ENCODE measurements at regions of chr5 and their contacts with region 1.

Region 1: DNA sequence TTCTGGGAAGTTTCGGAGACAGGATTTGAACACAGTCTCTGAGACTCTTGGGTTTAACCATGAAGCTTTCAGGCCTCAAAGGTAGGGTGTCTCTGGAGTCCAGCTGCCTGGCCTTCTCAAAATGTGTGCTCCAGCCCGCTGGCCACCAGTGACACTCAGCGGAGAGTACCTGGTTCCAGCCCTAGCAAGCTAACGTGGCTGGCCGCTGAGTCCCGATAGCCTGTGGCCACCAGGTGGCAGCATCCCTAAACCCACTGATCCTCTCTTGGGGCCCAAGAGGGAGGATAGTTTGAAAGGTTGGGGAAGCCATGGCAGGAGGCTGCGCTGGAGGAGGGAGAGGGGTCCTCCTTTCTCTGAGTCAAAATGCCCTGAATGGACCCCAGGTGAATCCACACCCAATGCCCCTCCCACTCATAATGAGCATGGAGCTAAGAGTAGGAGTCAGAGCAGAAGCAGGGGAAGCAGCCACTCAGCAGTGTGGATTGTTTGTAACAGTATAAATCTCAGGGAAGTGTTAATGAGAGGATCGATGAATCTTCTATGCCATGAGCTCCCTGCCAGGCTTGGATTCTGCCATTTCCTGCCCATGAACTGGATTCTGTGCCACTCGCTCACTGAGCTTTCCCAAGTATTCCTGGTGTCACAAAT is 5.4 kb upstream of the TIFAB start:
- DNase-seq: peak; percentile 74
- ATAC-seq: peak; percentile 84
- H3K4me3 ChIP-seq: no peak overlapping the region
- H3K27ac ChIP-seq: no peak overlapping the region
- H3K4me1 ChIP-seq: peaks cover 10 to 38% of the 10 kb centered on the region in 2 experiments
- H3K27me3 ChIP-seq: no peaks in the 10 kb centered on the region
- CTCF ChIP-seq: peak; percentile 89 to 97 (median 95)
- POLR2A ChIP-seq: no peak
- RAD21 ChIP-seq: peak; percentile 71

Region 2: DNA sequence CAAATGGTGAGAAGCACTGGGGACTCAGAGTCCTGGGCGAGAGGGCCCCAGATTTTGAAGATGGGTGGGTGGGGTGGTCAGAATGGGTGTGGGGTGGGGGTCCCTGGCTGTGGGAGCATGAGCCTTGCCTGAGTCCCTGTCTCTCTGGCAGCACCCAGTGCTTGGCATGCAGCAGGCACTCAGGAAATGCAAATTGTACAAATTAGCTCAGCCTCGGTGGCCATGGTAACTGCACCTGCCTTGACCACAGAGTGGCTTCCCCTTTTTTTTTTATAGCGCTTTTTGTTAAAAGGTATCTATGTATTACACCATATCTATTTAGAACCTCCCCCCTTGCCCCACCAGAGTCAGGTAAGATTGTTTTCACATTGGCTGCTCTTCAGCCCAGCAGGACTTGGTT is 404.3 kb before region 1 on chr5:
- CTCF ChIA-PET with region 1: no interaction called
- POLR2A ChIA-PET with region 1: no interaction called
- RAD21 ChIA-PET with region 1: no interaction called
- intact Hi-C with region 1: no loop called
- DNase-seq: no peak
- ATAC-seq: no peak
- H3K4me3 ChIP-seq: no peak overlapping the region
- H3K27ac ChIP-seq: no peak overlapping the region
- H3K4me1 ChIP-seq: no peaks in the 10 kb centered on the region
- H3K27me3 ChIP-seq: no peaks in the 10 kb centered on the region
- CTCF ChIP-seq: no peak
- POLR2A ChIP-seq: no peak
- RAD21 ChIP-seq: no peak

Region 3: DNA sequence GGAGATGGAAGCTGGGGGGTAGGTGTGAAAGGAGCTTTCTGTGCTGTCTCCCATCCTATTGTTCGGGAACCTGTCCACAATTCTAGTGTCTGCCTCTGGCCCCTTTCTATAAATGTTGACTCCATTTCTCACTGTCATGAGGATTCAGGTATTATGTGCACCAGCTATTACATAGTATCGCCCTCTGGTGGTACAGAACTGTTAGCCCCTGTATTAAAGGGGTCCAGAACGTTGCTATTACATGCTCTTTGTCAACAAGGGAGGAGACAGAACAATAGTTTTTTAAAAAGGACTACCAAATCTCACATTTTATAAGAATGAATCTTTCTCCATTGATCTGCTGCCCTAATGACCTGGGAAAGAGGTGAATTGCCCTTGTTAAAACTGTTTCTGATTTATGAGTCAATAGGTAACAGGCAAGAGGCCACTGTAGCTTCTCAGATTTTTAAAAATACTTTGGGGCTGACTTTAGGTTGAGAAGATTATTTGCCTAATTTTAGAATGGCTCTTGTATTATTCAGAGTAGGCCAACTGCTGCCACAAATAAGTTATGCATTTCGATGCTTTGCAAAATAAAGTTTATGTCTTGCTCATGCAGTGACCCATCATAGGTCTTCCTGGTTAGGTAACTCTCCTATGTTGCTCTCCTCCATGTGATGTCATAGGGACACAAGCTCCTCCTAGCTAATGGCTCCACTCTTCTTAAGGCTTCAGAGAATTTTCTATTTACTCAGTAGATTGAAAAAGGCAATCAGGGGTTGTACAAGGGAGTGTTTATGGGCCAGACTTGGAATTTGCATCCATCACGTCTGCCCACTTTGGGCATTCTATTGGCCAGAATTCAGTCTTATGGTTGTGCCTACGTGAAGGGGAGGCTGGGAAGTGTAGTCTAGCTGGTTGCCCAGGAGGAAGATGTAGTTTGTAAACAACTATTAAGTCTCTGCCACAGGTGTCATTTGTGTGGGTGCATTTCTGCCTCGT is 31.2 kb before region 1 on chr5:
- CTCF ChIA-PET with region 1: interaction called, 17 read pairs
- POLR2A ChIA-PET with region 1: interaction called, 4 read pairs
- RAD21 ChIA-PET with region 1: no interaction called
- intact Hi-C with region 1: no loop called
- DNase-seq: peak; percentile 65
- ATAC-seq: peak; percentile 92
- H3K4me3 ChIP-seq: no peak overlapping the region
- H3K27ac ChIP-seq: no peak overlapping the region
- H3K4me1 ChIP-seq: peaks cover 9 to 23% of the 10 kb centered on the region in 2 experiments; a peak in 3 of 4 replicates
- H3K27me3 ChIP-seq: no peaks in the 10 kb centered on the region
- CTCF ChIP-seq: peak; percentile 66 to 92 (median 86); a peak in 5 of 6 replicates
- POLR2A ChIP-seq: no peak
- RAD21 ChIP-seq: peak; percentile 77

Region 4: GRCh38 chr5:135551593-135552447 is 94.3 kb after region 1 on chr5:
- CTCF ChIA-PET with region 1: interaction called, 476 read pairs
- POLR2A ChIA-PET with region 1: interaction called, 12 read pairs
- RAD21 ChIA-PET with region 1: interaction called, 5 to 8 read pairs
- intact Hi-C with region 1: loop called (anchors 1 kb)
- DNase-seq: peak; percentile 69
- ATAC-seq: peak; percentile 85
- H3K4me3 ChIP-seq: no peak overlapping the region
- H3K27ac ChIP-seq: no peak overlapping the region
- H3K4me1 ChIP-seq: peaks cover 8% of the 10 kb centered on the region in 2 experiments
- H3K27me3 ChIP-seq: peaks cover 11% of the 10 kb centered on the region; the same call in 1 of the 2 replicates
- CTCF ChIP-seq: peak; percentile 85 to 92 (median 92)
- POLR2A ChIP-seq: no peak
- RAD21 ChIP-seq: peak; percentile 94

Region 5: GRCh38 chr5:135565725-135566421 is 108.3 kb after region 1 on chr5:
- CTCF ChIA-PET with region 1: interaction called, 153 read pairs
- POLR2A ChIA-PET with region 1: no interaction called
- RAD21 ChIA-PET with region 1: interaction called, 5 to 9 read pairs
- intact Hi-C with region 1: loop called (anchors 1 kb)
- DNase-seq: peak; percentile 50
- ATAC-seq: peak; percentile 77
- H3K4me3 ChIP-seq: no peak overlapping the region
- H3K27ac ChIP-seq: no peak overlapping the region
- H3K4me1 ChIP-seq: peaks cover 0 to 13% of the 10 kb centered on the region in 2 experiments; a peak in 1 of 4 replicates
- H3K27me3 ChIP-seq: no peaks in the 10 kb centered on the region
- CTCF ChIP-seq: peak; percentile 84 to 98 (median 97); a peak in 5 of 6 replicates
- POLR2A ChIP-seq: no peak
- RAD21 ChIP-seq: peak; percentile 71

Region 6: DNA sequence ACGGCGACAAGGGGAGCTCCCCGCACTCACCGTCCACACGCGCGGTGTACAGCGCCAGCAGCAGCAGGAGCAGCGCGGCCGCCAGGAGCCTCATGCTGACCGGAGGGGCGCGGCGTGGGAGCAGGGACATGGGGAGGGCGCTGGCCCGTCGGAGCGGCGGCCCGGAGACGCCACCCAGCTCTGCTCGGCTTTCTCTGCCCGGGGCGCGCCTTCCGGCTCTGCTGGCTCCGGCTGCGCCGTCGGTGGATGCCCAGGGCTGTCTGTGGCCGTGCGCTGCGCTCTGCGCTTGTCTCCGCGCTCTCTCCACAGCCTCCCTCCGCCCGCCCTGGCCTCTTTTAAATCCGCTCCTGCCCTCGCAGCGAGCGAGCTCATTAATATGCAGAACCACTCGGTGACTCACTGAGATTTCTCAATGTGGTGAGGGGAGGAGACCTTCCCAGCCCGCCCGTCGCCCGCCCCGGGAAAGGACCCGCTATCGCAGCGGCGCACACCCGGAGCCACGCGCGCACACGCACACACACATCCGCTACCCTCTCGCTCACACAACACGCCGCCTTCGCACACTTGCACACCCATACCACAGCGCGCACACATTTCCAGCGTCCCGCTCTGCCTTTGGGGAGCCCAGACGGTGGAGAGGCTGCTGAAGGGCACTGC is 121.3 kb after region 1 on chr5 and contains the start of gene CXCL14:
- CTCF ChIA-PET with region 1: no interaction called
- POLR2A ChIA-PET with region 1: no interaction called
- RAD21 ChIA-PET with region 1: no interaction called
- intact Hi-C with region 1: no loop called
- DNase-seq: no peak
- ATAC-seq: no peak
- H3K4me3 ChIP-seq: no peak within 1 kb of the TSS
- H3K27ac ChIP-seq: no peak within 1 kb of the TSS
- H3K4me1 ChIP-seq: peaks cover 0 to 10% of the 10 kb centered on the region in 2 experiments; a peak in 2 of 4 replicates
- H3K27me3 ChIP-seq: peaks cover 22% of the 10 kb centered on the region; the same call in 1 of the 2 replicates
- CTCF ChIP-seq: no peak
- POLR2A ChIP-seq: no peak
- RAD21 ChIP-seq: no peak
- total RNA-seq, gene CXCL14: not detected

Region 7: DNA sequence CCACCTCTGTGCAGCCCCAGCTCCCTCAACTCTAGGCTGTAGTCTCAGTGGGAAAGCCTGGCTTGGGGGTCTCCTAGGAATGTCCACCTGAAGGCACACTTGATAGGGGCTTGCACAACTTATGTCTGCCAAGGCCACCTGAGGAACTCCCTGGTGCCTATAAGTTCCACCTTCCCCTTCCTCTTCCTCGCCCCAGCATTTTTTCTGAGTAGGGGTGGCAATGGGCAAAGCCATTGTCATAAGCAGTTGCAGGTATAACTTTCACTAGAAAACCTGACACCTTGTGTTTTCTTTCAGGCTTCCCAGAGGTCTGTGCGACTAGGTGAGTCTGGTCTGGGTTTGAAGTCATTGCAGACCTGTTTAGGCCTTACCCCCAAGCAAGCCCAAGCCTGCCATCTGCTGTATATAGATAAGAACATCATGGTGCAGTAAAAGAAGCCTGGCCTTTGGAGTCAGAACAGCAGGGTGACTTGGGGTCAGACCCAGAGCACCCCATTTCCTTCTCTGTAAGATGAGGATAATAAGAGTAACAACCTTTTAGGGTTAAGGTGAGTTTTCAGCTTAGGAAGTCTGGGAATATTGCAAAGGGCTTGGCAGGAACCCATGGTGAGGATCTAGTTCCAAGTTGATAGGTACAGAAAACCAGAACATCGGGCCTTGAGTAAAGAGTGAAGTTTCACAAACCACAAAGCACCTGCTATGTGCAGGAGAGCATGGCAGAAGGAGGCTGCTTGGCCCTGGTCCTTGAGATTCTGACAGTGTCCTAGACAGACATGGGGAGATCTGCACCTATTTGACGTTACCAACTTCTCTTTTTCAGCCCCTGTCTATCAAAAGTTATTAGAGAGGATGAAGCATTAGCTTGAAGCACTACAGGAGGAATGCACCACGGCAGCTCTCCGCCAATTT is 605.1 kb after region 1 on chr5:
- CTCF ChIA-PET with region 1: no interaction called
- POLR2A ChIA-PET with region 1: no interaction called
- RAD21 ChIA-PET with region 1: no interaction called
- intact Hi-C with region 1: loop called (anchors 10 kb)
- DNase-seq: peak; percentile 77
- ATAC-seq: peak; percentile 79
- H3K4me3 ChIP-seq: no peak overlapping the region
- H3K27ac ChIP-seq: no peak overlapping the region
- H3K4me1 ChIP-seq: peaks cover 15 to 20% of the 10 kb centered on the region in 2 experiments
- H3K27me3 ChIP-seq: no peaks in the 10 kb centered on the region
- CTCF ChIP-seq: peak; percentile 69 to 96 (median 79)
- POLR2A ChIP-seq: no peak
- RAD21 ChIP-seq: peak; percentile 99

Measured in HCT116 (cell line).